Psoas muscle (tissue), 8 donors: ENCODE measurements at regions of chr2 and their contacts with region 1.

Region 1: GRCh38 chr2:112749755-112750559 is 14.5 kb downstream of the CKAP2L start:
- DNase-seq: peak; percentile 61 to 74
- ATAC-seq: peak in 3 of 4 donors; percentile 16 to 60 (median 51)
- H3K4me3 ChIP-seq: no peak overlapping the region
- H3K27ac ChIP-seq: no peak overlapping the region
- H3K4me1 ChIP-seq: no peaks in the 10 kb centered on the region
- H3K27me3 ChIP-seq: no peaks in the 10 kb centered on the region
- CTCF ChIP-seq: peak; percentile 75

Region 2: DNA sequence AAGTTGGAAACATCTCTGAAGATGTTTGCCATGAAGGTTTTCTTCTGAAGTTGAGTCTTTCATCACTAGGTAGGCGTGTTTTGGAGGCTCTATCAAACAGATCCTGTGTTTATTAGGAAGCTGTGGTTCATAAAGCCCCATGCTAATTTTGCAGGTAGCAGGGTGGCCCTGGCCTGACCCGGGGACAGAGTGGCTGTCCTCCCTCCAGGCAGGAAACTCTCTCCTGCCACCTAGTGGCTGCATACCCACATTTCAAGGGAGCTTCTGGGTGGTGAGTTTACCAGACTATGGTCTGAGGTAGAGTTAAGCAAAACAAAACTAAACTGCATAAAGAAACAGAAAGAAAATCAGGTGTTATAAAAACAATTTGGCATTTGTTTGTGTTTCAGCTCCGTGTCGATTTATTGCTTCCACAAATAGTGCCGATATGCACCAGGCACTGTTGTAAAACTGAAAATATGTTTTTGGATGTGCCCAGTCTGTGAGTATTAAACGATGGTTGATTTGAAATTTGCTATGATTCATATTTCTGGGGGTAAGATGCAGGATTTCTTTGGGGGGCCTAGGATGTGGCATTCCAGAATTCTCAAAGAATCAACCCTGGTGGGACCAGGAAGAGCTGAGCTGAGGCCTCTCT is 135.0 kb after region 1 on chr2:
- intact Hi-C with region 1: loop called in 1 of 2 experiments (anchors 5 kb)
- DNase-seq: peak in 1 of 2 donors; percentile 18
- ATAC-seq: peak in 1 of 4 donors; percentile 60
- H3K4me3 ChIP-seq: no peak overlapping the region
- H3K27ac ChIP-seq: no peak overlapping the region
- H3K4me1 ChIP-seq: no peaks in the 10 kb centered on the region
- H3K27me3 ChIP-seq: no peaks in the 10 kb centered on the region
- CTCF ChIP-seq: peak; percentile 63

Region 3: DNA sequence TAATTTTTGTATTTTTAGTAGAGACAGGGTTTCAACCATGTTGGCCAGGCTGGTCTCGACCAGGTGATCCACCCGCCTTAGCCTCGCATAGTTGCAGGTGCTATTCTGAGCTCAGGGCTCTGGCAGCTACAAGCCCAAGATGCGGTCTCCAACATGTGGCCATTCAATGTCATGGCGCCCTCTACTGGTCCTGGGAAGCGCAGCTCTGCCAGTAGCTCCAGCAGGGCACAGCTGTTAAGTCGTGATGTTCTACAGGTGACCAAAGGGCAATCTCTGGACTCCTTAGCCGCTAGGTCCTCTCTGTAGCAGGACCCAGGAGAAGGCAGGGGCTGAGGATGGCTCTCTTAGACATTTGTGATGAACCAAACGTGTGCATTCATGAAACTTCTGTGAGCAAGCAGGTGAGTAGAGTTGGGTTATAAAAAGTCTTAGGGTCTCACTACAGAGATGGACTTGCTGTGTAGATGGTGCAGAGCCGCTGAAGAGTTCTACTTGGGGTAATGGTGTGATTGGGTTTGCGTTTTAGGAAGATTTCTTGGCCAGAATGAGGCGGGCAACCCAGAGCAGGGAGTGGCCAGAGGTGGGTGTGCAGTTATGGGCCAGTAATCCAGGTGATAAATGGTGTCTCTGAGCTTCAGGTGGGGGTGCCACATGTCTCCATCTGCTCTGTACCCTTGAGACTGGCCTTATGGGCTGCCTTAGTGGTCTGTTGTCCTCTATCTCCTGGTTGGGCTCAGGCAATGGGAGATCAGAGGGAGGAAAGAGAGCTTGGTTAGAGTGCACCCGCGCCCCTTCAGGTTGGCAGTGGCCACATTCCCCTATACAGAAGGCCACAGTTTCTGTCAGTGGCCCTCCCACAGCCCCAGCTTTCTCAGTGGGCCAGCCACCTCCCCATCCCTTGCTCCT is 192.0 kb after region 1 on chr2:
- intact Hi-C with region 1: loop called in 1 of 2 experiments (anchors 5 kb)
- DNase-seq: peak in 1 of 2 donors; percentile 27
- ATAC-seq: no peak
- H3K4me3 ChIP-seq: no peak overlapping the region
- H3K27ac ChIP-seq: no peak overlapping the region
- H3K4me1 ChIP-seq: no peaks in the 10 kb centered on the region
- H3K27me3 ChIP-seq: peaks cover 0 to 3% (median 0%) of the 10 kb centered on the region in 3 donors
- CTCF ChIP-seq: peak; percentile 38

Region 4: DNA sequence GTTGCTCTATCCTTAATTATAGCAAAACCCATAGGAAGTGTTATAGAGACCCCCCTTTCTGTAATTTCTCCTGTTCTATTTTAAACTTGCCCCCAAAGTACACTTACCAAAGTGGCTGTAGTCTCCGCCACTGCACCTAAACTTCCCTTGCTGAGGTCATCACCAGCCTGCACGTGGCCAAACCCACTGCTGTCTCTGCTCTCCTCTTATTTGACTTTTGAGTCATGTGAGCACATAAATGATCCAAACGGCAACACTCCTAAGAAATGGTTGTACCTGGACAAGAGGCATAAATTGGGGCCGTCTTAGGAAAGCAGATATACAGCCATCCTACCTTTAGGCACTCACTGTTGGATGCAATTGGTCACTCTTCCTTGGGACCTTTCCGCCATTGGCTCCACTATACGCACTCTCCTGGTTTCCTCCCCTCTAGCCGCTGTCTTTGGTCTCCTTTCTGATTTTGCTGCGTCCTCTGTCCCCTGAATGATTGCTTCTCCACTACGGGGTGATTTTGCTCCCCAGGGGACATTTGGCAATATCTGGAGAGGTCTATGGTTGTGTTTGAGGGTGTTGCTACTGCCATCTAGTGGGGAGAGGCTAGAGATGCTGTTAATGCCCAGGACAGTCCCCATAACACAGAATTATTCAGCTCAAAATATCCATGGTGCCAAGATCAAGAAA is 208.6 kb after region 1 on chr2:
- intact Hi-C with region 1: loop called in 1 of 2 experiments (anchors 2 kb)
- DNase-seq: no peak
- ATAC-seq: peak in 1 of 4 donors; percentile 41
- H3K4me3 ChIP-seq: no peak overlapping the region
- H3K27ac ChIP-seq: no peak overlapping the region
- H3K4me1 ChIP-seq: no peaks in the 10 kb centered on the region
- H3K27me3 ChIP-seq: peaks cover 0 to 6% (median 0%) of the 10 kb centered on the region in 3 donors
- CTCF ChIP-seq: peak; percentile 55